ENCODE measurements at regions of chr6 and their contacts with region 1.

Region 1: DNA sequence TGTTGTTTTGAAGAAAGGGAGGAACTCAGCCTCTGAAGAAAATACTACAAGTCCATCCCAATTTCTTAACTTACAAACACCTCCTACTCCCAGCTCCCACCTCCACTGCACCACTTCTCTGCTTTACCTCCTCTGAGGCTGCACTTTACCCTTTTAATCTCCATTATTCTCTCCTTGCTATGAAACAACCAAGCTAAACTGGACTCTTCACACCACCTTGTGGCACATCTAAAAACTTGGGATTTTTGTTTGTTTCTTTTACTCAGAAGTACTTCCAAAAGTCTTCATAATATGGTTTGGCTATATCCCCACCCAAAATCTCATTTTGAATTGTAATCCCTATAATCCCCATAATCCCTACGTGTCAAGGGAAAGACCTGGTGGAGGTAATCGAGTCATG is 142.2 kb downstream of the MOXD1 start:
- DNase-seq: peak; percentile 19
- H3K4me3 Mint-ChIP-seq: no peak overlapping the region
- H3K27ac Mint-ChIP-seq: no peak overlapping the region
- H3K4me1 Mint-ChIP-seq: no peaks in the 10 kb centered on the region
- H3K27me3 Mint-ChIP-seq: no peaks in the 10 kb centered on the region
- CTCF ChIP-seq: peak; percentile 35

Region 2: DNA sequence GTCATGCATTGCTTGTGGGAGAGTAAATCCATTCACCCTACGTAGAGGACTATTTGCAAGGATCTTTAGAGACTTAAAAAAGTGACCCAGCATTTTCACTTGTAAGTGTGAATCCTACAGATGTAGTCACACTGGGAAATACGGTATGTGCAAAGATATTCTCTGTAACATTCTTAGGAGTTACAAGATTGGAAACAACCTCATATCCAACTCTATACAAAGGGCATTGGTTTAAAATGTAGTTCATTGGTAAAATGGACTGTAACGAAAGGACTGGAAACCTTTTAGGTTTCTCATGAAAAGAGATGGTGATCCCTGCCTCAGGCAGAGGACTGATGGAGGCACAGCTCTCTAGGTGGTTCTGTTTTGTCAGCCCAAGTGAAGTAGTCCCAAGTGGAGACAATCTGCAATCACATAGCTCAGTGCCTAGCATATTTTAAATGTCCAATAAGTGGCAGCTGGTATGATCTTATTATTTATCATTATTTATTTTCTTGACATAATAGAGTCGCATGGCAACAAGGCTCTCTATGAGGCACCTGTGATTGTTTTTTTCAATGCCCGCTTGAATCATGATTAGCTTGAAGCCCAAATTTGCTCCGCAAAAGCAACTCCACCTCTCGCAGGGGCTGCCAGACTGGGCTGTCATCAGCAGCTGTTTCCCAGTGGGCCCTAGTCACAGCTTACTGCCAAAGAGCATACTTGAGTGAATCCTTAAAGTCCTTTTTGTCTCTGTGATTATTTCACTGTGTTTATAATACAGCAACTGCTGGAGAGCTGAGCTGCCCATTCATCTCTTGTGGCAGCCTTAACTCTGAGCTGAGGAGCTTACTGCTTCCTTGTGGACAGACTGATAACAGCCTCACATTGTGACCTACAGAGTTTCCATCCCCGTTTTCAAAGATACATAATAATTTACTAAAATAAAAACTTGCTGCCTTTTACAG is 471.0 kb before region 1 on chr6:
- CTCF ChIA-PET with region 1: no interaction called
- intact Hi-C with region 1: loop called (anchors 10 kb)
- DNase-seq: no peak
- H3K4me3 Mint-ChIP-seq: no peak overlapping the region
- H3K27ac Mint-ChIP-seq: no peak overlapping the region
- H3K4me1 Mint-ChIP-seq: no peaks in the 10 kb centered on the region
- H3K27me3 Mint-ChIP-seq: peaks cover 27% of the 10 kb centered on the region
- CTCF ChIP-seq: no peak

Region 3: DNA sequence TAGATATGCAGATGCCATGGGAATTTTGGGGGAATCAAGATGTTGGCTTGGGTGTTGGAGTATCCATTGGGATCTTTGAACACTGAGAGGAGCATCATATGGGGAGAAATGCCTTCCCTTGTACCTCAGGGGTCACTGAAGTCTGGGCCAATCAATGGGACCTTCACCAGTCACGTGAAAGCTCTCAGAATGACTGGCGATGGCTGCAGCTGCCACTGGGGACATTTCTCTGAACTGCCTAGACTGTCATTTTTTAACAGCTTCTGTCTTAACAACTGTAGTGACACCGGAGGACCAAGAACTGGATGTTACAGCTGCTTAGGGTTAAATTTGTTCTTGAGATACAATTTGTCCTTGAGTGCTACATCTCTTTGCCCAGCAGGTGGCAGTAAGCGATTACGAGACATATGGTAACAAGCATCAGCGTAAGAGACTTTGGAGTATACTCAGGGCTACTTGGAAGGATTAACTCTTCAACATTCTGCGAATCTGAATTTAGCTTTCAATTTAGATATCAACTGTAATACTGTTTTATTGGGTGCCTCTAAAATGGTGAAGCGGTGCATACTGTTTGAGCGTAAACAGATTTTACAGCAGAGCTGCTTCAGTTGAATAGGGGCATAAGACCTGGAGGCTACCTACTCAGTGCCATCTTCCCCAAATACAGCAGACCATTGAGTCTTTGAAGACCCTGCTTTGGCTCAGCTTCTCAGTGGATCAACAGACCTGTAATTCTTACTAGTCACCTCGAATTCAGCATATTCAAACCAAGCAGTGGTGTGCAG is 343.9 kb before region 1 on chr6:
- CTCF ChIA-PET with region 1: interaction called, 12 read pairs
- intact Hi-C with region 1: no loop called
- DNase-seq: peak; percentile 64
- H3K4me3 Mint-ChIP-seq: no peak overlapping the region
- H3K27ac Mint-ChIP-seq: no peak overlapping the region
- H3K4me1 Mint-ChIP-seq: peaks cover 7% of the 10 kb centered on the region
- H3K27me3 Mint-ChIP-seq: peaks cover 11% of the 10 kb centered on the region
- CTCF ChIP-seq: peak; percentile 66

Region 4: GRCh38 chr6:131923356-131923755 is 335.7 kb before region 1 on chr6:
- CTCF ChIA-PET with region 1: interaction called, 12 read pairs
- intact Hi-C with region 1: loop called (anchors 1 kb)
- DNase-seq: peak; percentile 61
- H3K4me3 Mint-ChIP-seq: no peak overlapping the region
- H3K27ac Mint-ChIP-seq: no peak overlapping the region
- H3K4me1 Mint-ChIP-seq: no peaks in the 10 kb centered on the region
- H3K27me3 Mint-ChIP-seq: no peaks in the 10 kb centered on the region
- CTCF ChIP-seq: peak; percentile 62

Region 5: DNA sequence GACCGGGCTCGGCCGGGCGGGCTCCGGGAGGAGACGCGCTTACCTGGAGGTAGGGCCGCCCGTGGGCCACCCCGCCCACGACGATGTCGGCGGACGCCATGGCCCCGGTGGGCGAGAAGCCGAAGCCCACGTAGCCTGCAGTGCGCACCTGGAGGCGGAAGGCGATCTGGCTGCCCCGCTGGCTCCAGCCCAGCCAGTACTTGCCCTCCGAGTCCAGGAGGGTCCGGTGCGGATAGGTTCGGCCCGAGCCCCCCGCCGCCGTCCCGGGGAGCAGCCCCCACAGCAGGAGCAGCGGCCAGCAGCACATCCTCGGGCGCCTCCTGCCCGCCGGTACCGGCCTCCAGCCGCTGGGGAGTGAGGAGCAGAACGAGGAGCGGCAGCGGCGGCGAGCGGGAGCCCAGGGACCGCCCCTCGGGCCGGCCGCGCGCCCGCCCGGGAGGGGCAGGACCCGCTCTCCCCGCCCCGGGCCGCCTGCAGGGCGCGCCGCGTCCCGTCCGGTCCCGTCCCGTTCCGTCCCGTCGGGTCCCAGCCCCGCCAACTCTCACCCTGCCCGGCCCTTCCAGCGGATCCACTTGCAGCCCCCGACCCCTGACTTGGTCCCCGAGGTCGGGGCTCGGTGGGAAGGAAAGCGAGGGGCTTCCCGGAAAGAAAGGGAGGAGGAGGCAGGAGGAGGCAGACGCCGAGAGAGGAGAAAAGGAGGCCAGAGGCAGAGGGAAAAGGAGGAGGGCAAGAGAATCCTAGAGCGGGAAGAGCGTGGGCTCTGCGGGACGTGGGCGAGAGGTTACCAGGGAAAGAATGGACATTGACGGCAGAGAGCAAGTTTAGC is 142.3 kb after region 1 on chr6 and contains the start of gene MOXD1:
- CTCF ChIA-PET with region 1: no interaction called
- intact Hi-C with region 1: no loop called
- DNase-seq: peak; percentile 79
- H3K4me3 Mint-ChIP-seq: peak within 1 kb of the TSS; percentile 69
- H3K27ac Mint-ChIP-seq: no peak within 1 kb of the TSS
- H3K4me1 Mint-ChIP-seq: peaks cover 13% of the 10 kb centered on the region
- H3K27me3 Mint-ChIP-seq: peaks cover 23% of the 10 kb centered on the region
- CTCF ChIP-seq: no peak
- total RNA-seq, gene MOXD1: 13.2 and 13.6 TPM in 2 replicates